Gastrocnemius medialis (tissue), 4 donors: ENCODE measurements at regions of chr11 and their contacts with region 1.

Region 1: GRCh38 chr11:65575568-65576231 is at the start of gene EHBP1L1:
- DNase-seq: peak in 1 of 2 donors; percentile 73
- ATAC-seq: peak; percentile 13
- H3K4me3 ChIP-seq: peak within 1 kb of the TSS; percentile 65 to 97 (median 80)
- H3K27ac ChIP-seq: peak within 1 kb of the TSS; percentile 100
- H3K4me1 ChIP-seq: peaks cover 64 to 75% of the 10 kb centered on the region in 2 donors
- H3K27me3 ChIP-seq: no peaks in the 10 kb centered on the region
- CTCF ChIP-seq: no peak
- POLR2A ChIP-seq: peak; percentile 82 to 85
- total RNA-seq, gene EHBP1L1: 191 to 374 (median 250) TPM

Region 2: DNA sequence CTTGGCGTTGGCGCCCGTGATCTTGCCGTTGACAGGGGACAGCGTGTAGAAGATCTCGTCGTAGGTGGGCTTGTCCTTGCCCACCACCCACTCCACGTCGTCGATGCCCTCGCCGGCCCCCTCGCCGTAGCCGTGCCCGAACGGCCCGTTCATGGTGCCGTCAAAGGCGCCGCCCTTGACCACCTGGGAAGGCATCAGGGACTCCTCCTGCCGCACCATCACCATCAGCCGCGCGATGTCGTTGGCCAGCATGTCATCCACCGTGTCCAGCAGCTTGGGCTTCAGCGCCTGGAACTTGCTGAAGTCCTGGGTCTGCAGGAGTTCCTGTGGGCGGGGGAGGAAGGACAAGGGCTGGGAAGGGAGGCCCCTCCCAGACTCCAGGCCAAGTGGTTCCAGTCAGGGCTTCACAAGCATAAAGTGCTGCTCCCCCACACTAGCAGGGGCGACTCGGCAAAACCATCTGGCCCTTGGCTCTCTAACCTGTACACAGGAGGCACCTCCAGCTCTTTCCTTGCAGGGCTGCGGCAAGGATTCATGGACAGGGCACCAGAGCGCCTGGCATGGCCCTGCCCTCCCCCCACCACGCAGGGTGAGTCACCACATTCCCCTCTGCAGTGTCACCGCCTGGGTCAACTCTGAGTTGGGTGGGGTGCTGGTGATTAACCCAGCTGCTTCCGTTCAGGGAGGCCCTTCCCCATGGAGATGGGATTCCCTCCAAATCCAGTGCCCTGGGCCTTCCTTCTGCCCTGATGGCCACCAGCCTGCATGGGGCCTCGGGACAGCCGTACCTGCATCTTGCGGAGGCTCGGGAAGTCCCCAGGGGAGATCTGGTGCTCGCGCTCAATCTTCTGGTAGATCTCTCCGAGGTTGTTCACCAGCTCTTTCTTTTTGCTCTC is 720.9 kb before region 1 on chr11:
- in situ Hi-C with region 1: no loop called
- intact Hi-C with region 1: loop called (anchors 5 kb)
- DNase-seq: peak; percentile 72 to 94
- ATAC-seq: peak; percentile 49 to 53
- H3K4me3 ChIP-seq: peak overlapping the region in 2 of 4 donors; percentile 7 to 19
- H3K27ac ChIP-seq: peak overlapping the region; percentile 90 to 94 (median 92)
- H3K4me1 ChIP-seq: peaks cover 86 to 96% of the 10 kb centered on the region in 2 donors
- H3K27me3 ChIP-seq: no peaks in the 10 kb centered on the region
- CTCF ChIP-seq: no peak
- POLR2A ChIP-seq: peak in 1 of 2 donors; percentile 14

Region 3: DNA sequence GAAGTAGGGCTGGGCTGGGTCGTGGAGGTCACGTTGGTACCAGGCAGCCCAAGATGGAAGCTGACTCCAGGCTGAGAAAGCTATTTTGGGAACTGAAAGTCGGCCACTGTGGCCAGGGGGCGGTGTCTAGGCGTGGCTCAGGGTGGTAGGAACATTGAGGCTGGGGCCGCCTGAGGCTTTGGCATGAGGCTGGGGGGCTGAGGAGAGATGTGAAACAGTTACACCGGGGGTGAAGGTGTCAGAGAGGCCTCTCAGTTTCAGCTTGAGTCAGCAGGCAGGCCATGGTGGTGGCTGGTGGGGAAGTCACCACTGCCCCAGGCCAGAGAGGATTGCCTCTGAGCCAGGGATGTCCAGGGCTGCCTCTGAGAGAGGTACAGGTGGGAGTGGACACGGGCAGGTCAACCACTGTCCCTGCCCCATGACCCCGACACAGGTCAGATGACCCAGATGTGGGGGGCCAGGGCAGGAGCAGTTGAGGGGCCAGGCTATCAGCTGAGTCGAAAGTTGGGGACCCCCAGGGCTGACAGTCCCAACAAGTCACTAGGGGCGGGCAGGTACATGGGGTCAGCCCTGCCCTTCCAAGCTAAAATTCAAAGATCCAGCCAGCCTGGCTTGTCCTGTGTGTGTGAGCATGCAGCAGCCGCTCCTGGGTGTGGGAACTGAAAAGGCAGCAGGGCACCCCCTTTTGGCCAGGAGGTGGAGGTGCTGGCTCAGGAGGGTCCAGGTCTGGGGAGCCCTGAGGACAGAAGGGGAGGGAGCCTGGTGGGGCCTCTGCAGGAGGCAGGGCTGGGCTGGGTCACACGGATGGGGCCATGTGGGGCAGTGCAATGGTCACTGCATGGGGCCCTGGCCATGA is 12.7 kb after region 1 on chr11:
- in situ Hi-C with region 1: no loop called
- intact Hi-C with region 1: loop called (anchors 1 kb)
- DNase-seq: peak; percentile 80 to 92
- ATAC-seq: peak; percentile 69 to 80
- H3K4me3 ChIP-seq: peak overlapping the region in 3 of 4 donors; percentile 23 to 34 (median 26)
- H3K27ac ChIP-seq: peak overlapping the region; percentile 91 to 99 (median 98)
- H3K4me1 ChIP-seq: peaks cover 65 to 72% of the 10 kb centered on the region in 2 donors
- H3K27me3 ChIP-seq: no peaks in the 10 kb centered on the region
- CTCF ChIP-seq: peak; percentile 55 to 84 (median 70)
- POLR2A ChIP-seq: peak; percentile 18 to 29